Dendritic cell treated with granulocyte-macrophage colony-stimulating factor and Interleukin-4, amounts not matched to agents 40 ng/mL and 50 ng/mL, for 4 days (primary cell): ENCODE measurements at regions of chr19 and their contacts with region 1.

Region 1: DNA sequence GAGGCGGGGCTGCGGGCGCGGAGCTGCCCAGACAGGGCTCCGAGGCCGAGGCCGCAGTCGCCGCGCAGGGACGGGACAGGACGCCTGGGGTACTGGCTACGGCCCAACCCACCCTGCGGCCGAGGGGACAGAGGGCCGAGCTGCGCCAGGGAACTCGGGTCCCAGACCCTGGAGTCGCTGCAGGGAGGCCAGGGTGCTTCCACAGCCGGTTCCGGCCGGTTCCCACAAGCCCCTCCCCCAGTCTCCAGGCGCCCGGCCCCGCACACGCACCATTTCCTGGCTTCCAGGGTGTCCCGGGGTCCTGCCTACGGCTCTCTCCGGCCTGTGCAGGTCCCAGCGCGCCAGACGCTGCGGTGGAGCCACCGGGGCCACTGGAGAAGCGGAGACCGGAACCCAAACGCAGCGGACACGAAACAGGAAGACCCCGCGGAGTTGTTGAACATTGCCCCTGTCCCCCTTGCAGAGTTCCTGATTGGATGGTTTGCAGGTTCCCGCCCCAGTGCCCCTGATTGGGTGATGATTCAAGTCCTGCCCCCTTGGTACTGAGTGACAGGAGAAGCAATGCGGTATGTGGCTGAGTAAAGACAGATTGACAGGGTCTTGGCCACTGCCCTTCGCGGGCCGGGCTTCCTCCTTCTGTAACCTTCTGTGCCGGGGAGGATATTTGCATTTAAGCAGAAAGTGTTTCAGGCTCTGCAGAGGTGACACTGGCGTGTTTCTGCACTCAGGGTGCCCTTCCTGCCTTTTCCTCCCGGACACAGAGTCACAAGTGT is at the start of gene ZNF564:
- H3K4me3 Mint-ChIP-seq: peak within 1 kb of the TSS; percentile 85
- H3K27ac Mint-ChIP-seq: peak within 1 kb of the TSS; percentile 94
- H3K4me1 Mint-ChIP-seq: peaks cover 17% of the 10 kb centered on the region
- H3K27me3 Mint-ChIP-seq: peaks cover 10% of the 10 kb centered on the region

Region 2: DNA sequence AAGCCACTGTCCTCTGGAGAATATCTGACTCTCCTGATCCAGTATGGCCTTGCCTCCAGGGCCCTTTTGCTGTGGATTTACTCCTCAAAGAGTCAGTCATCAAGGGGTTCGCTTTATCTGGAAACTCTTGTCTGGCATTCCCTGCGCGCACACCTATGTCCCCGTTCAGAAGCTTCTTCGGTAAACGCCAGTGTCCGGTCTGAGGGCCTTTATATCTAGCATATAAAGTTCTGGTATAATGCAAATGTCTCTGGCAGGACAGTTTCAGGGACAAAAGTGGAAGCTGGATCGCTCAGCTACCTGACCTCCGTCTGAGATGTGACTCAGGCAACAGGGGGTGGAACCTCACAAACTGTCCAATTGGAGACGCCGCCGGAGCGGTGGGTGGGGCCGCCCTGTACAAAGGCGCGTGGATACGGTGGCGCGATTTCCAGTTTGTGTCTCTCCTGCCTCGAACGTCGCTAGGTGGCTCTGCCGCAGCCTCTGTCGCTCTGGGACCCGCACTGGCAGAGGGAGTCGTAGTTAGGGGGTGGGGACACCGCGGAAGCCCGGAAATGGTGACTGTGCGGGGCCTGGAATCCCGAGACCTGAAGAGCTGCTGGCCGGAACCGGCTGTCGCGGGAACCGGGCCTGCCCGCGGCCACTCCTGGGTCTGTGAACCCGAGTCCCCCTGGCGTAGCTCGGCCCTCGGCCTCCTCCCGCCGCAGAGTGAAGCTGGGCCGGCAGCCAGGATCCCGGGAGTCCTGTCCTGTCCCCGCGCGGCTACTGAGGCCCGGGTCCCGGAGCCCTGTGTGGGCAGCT is 56.0 kb before region 1 on chr19:
- intact Hi-C with region 1: loop called (anchors 5 kb)
- H3K4me3 Mint-ChIP-seq: peak overlapping the region; percentile 83
- H3K27ac Mint-ChIP-seq: peak overlapping the region; percentile 54
- H3K4me1 Mint-ChIP-seq: peaks cover 6% of the 10 kb centered on the region
- H3K27me3 Mint-ChIP-seq: peaks cover 15% of the 10 kb centered on the region